Activated CD8-positive, alpha-beta T cell treated with anti-CD3 and anti-CD28 coated beads, Interleukin-2, amount 10 ng/mL, durations not matched to agents 7 days and 5 days (primary cell): ENCODE measurements at regions of chr19 and their contacts with region 1.

Region 1: GRCh38 chr19:47190167-47190727 is 40.8 kb downstream of the BBC3 start:
- DNase-seq: peak; percentile 34
- ATAC-seq: no peak
- H3K4me3 Mint-ChIP-seq: no peak overlapping the region
- H3K27ac Mint-ChIP-seq: peak overlapping the region; percentile 27
- H3K4me1 Mint-ChIP-seq: peaks cover 61% of the 10 kb centered on the region
- H3K27me3 Mint-ChIP-seq: no peaks in the 10 kb centered on the region

Region 2: DNA sequence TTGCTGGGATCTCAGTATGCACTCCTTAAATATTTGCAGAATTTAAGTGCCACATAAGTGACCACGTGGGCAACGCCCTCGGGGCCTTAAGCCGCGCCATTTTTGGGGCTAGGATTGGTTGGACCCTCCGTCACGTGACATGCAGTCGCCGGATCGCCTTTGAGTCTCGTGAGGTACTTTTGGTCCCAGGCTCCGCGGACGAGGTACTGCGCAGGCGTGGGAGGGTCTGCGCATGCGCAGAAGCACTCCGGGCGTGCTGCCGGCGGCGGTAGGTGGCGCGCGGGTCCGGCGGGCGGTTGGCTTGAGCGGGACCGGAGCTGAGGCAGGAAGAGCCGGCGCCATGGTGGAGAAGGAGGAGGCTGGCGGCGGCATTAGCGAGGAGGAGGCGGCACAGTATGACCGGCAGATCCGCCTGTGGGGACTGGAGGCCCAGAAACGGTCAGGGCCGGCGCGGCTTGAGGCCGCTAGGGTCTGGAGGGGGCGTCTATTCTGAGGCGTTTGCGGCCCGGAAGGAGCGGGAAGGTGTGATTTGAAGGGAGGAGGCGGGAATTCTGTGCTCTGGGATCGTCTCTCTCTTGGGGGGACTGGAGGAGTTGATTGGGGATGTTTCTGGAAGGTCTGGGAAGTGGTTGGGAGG is 59.5 kb before region 1 on chr19 and contains the start of gene SAE1:
- CTCF ChIA-PET with region 1: interaction called, 10 read pairs
- POLR2A ChIA-PET with region 1: interaction called, 8 read pairs
- DNase-seq: peak; percentile 94
- ATAC-seq: peak; percentile 91
- H3K4me3 Mint-ChIP-seq: peak within 1 kb of the TSS; percentile 99
- H3K27ac Mint-ChIP-seq: peak within 1 kb of the TSS; percentile 98
- H3K4me1 Mint-ChIP-seq: peaks cover 51% of the 10 kb centered on the region
- H3K27me3 Mint-ChIP-seq: no peaks in the 10 kb centered on the region
- total RNA-seq, gene SAE1: 165 to 175 TPM

Region 3: GRCh38 chr19:47143322-47144073 is 46.7 kb before region 1 on chr19:
- CTCF ChIA-PET with region 1: interaction called, 23 read pairs
- POLR2A ChIA-PET with region 1: interaction called, 3 read pairs
- DNase-seq: no peak
- ATAC-seq: no peak
- H3K4me3 Mint-ChIP-seq: no peak overlapping the region
- H3K27ac Mint-ChIP-seq: peak overlapping the region; percentile 26
- H3K4me1 Mint-ChIP-seq: peaks cover 56% of the 10 kb centered on the region
- H3K27me3 Mint-ChIP-seq: no peaks in the 10 kb centered on the region

Region 4: GRCh38 chr19:47152224-47153017 is 37.8 kb before region 1 on chr19:
- CTCF ChIA-PET with region 1: interaction called, 55 read pairs
- POLR2A ChIA-PET with region 1: interaction called, 19 read pairs
- DNase-seq: no peak
- ATAC-seq: no peak
- H3K4me3 Mint-ChIP-seq: no peak overlapping the region
- H3K27ac Mint-ChIP-seq: no peak overlapping the region
- H3K4me1 Mint-ChIP-seq: peaks cover 40% of the 10 kb centered on the region
- H3K27me3 Mint-ChIP-seq: no peaks in the 10 kb centered on the region

Region 5: GRCh38 chr19:47176627-47177090 is 13.6 kb before region 1 on chr19:
- CTCF ChIA-PET with region 1: interaction called, 23 read pairs
- POLR2A ChIA-PET with region 1: interaction called, 12 read pairs
- DNase-seq: peak; percentile 41
- ATAC-seq: peak; percentile 73
- H3K4me3 Mint-ChIP-seq: peak overlapping the region; percentile 17
- H3K27ac Mint-ChIP-seq: peak overlapping the region; percentile 74
- H3K4me1 Mint-ChIP-seq: peaks cover 54% of the 10 kb centered on the region
- H3K27me3 Mint-ChIP-seq: no peaks in the 10 kb centered on the region

Region 6: GRCh38 chr19:47357788-47358680 is 167.8 kb after region 1 on chr19:
- CTCF ChIA-PET with region 1: no interaction called
- POLR2A ChIA-PET with region 1: no interaction called
- DNase-seq: no peak
- ATAC-seq: peak; percentile 33
- H3K4me3 Mint-ChIP-seq: no peak overlapping the region
- H3K27ac Mint-ChIP-seq: no peak overlapping the region
- H3K4me1 Mint-ChIP-seq: no peaks in the 10 kb centered on the region
- H3K27me3 Mint-ChIP-seq: no peaks in the 10 kb centered on the region